HepG2 (cell line): ENCODE measurements at regions of chr7 and their contacts with region 1.

Region 1: GRCh38 chr7:152899548-152900109 is 140.1 kb downstream of the ACTR3B start:
- DNase-seq: peak; percentile 78
- ATAC-seq: peak; percentile 88
- H3K4me3 ChIP-seq: peak overlapping the region; percentile 23 to 46 (median 40); a peak in 5 of 6 replicates
- H3K27ac ChIP-seq: peak overlapping the region; percentile 80
- H3K4me1 ChIP-seq: peaks cover 45% of the 10 kb centered on the region
- H3K27me3 ChIP-seq: no peaks in the 10 kb centered on the region
- CTCF ChIP-seq: no peak
- EP300 ChIP-seq: no peak; a peak in 1 of 4 replicates
- POLR2A ChIP-seq: peak in 1 of 2 experiments; percentile 40; a peak in 1 of 4 replicates
- RAD21 ChIP-seq: no peak

Region 2: GRCh38 chr7:151968357-151968756 is 931.3 kb before region 1 on chr7:
- CTCF ChIA-PET with region 1: no interaction called
- POLR2A ChIA-PET with region 1: no interaction called
- in situ Hi-C with region 1: no loop called
- intact Hi-C with region 1: no loop called
- DNase-seq: no peak
- ATAC-seq: no peak
- H3K4me3 ChIP-seq: no peak overlapping the region
- H3K27ac ChIP-seq: no peak overlapping the region
- H3K4me1 ChIP-seq: no peaks in the 10 kb centered on the region
- H3K27me3 ChIP-seq: no peaks in the 10 kb centered on the region; a peak in 1 of 5 replicates
- CTCF ChIP-seq: no peak
- EP300 ChIP-seq: no peak
- POLR2A ChIP-seq: no peak
- RAD21 ChIP-seq: no peak

Region 3: DNA sequence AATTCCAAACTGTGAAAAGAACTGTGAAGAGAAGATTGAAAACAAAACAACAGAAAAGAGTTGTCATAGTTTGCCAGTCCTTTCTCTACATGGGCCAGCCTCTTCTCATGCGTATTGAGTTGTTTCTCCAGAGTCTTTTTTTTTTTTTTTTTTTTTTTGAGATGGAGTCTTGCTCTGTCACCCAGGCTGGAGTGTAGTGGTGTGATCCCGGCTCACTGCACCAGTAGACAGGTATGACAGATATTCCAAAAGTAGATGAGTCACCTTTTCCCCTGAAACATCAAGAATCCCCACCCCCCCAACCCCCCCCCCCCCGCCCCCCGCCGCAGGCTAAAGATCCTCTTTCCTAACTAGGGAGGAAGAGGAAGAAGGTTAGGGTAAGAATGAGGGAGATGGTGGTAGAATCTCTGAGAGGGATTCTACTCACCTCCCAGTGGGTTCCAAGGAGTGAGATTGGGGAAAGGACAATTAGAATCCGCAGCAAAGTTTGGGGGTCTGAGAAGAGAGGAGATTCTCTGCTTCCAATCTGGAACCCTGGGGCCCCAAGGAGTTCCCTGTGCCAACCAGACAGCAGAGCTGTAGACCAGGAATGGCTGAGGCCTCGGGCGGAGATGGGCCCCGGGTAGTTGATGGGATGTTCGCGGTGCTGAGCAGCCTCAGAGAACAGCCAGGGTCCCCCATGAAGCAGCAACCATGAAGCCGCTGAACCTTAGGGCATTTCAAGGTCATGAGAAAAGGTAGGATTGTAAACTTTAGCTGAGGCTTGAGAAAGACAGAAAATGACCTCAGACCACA is 448.1 kb before region 1 on chr7:
- CTCF ChIA-PET with region 1: no interaction called
- POLR2A ChIA-PET with region 1: no interaction called
- in situ Hi-C with region 1: no loop called
- intact Hi-C with region 1: no loop called
- DNase-seq: no peak
- ATAC-seq: no peak
- H3K4me3 ChIP-seq: no peak overlapping the region
- H3K27ac ChIP-seq: no peak overlapping the region
- H3K4me1 ChIP-seq: no peaks in the 10 kb centered on the region
- H3K27me3 ChIP-seq: no peaks in the 10 kb centered on the region
- CTCF ChIP-seq: no peak
- EP300 ChIP-seq: no peak
- POLR2A ChIP-seq: no peak
- RAD21 ChIP-seq: no peak

Region 4: GRCh38 chr7:152910545-152911225 is 11.1 kb after region 1 on chr7:
- CTCF ChIA-PET with region 1: no interaction called
- POLR2A ChIA-PET with region 1: interaction called, 26 read pairs
- in situ Hi-C with region 1: no loop called
- intact Hi-C with region 1: no loop called
- DNase-seq: peak; percentile 89
- ATAC-seq: peak; percentile 57
- H3K4me3 ChIP-seq: peak overlapping the region; percentile 9 to 47 (median 25); a peak in 5 of 6 replicates
- H3K27ac ChIP-seq: peak overlapping the region; percentile 95
- H3K4me1 ChIP-seq: peaks cover 69% of the 10 kb centered on the region
- H3K27me3 ChIP-seq: no peaks in the 10 kb centered on the region
- CTCF ChIP-seq: no peak
- EP300 ChIP-seq: peak; percentile 13 to 62; a peak in 2 of 4 replicates
- POLR2A ChIP-seq: no peak
- RAD21 ChIP-seq: no peak

Region 5: DNA sequence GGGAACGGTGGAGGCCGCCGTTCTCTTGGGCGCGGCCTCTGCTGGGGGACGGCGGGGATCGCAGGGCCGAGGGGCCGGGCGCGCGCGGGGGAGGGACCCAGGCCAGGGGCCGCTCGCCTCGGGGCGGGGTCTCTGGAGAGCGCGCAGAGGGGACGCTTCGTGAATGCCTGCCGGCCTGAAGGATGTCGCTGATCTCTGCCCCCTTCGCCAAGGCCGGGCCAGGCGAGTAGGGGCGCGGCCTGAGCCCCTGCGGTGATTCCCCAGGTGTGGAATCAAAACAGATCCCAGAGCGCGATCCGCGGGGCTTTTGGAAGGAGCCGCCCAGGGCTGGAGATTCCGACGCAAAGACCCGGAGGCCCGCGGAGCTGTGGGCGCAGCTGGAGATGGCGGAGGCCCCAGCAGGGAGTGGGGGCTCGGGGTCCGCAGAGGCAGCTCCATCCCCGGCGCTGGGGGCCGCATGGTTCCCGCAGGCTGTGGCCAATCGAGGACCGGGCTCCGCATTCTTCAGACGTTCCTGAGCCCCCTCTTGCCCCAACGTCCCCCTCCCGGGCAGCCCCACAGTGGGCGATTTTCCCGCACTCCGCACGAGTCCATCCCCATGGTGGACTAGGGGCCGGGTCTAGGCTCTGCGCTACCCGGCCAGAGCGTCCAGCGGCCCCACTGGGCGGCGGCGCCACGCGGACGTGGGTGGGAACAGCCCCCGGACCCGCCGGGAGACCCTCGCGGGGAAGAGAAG is 26.0 kb after region 1 on chr7:
- CTCF ChIA-PET with region 1: interaction called, 6 read pairs
- POLR2A ChIA-PET with region 1: interaction called, 10 read pairs
- in situ Hi-C with region 1: no loop called
- intact Hi-C with region 1: no loop called
- DNase-seq: no peak
- ATAC-seq: peak; percentile 94
- H3K4me3 ChIP-seq: peak overlapping the region; percentile 30 to 67 (median 53); a peak in 4 of 6 replicates
- H3K27ac ChIP-seq: no peak overlapping the region
- H3K4me1 ChIP-seq: no peaks in the 10 kb centered on the region
- H3K27me3 ChIP-seq: peaks cover 2 to 15% of the 10 kb centered on the region in 2 experiments; a peak in 2 of 5 replicates
- CTCF ChIP-seq: peak; percentile 50
- EP300 ChIP-seq: no peak
- POLR2A ChIP-seq: no peak
- RAD21 ChIP-seq: no peak; the same call in 1 of the 2 replicates